PC-3 (cell line): ENCODE measurements at regions of chr14 and their contacts with region 1.

Region 1: DNA sequence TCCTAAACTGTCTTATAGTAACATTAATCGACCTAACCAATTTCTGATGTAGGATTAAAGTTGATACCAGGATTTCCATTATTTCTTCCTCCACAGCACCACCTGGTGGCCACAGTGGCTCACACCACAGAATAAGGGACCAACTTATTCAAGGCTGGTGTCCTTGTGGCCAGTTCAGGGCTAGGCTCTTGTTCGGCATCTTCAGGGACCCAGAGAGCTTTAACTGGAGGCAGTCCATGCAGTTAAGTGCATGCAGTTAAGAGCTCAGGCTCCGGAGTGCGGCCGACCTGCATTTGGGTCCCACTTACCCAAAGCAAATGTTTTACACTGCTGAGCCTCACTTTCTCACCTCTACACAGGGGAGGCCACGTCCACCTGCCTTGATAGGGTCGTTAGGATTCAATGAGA is 42.0 kb upstream of the GPR68 start:
- DNase-seq: peak; percentile 86
- ATAC-seq: peak; percentile 64
- H3K4me3 ChIP-seq: no peak overlapping the region
- H3K27ac ChIP-seq: no peak overlapping the region
- H3K4me1 ChIP-seq: peaks cover 28% of the 10 kb centered on the region
- H3K27me3 ChIP-seq: no peaks in the 10 kb centered on the region
- CTCF ChIP-seq: peak; percentile 93

Region 2: GRCh38 chr14:90903101-90903500 is 383.4 kb before region 1 on chr14:
- CTCF ChIA-PET with region 1: no interaction called
- POLR2A ChIA-PET with region 1: no interaction called
- intact Hi-C with region 1: loop called (anchors 1 kb)
- DNase-seq: peak; percentile 75
- ATAC-seq: peak; percentile 99
- H3K4me3 ChIP-seq: no peak overlapping the region
- H3K27ac ChIP-seq: no peak overlapping the region
- H3K4me1 ChIP-seq: no peaks in the 10 kb centered on the region
- H3K27me3 ChIP-seq: no peaks in the 10 kb centered on the region
- CTCF ChIP-seq: peak; percentile 91

Region 3: GRCh38 chr14:91228112-91229004 is 58.2 kb before region 1 on chr14:
- CTCF ChIA-PET with region 1: no interaction called
- POLR2A ChIA-PET with region 1: no interaction called
- intact Hi-C with region 1: loop called (anchors 10 kb)
- DNase-seq: peak; percentile 85
- ATAC-seq: peak; percentile 79
- H3K4me3 ChIP-seq: no peak overlapping the region
- H3K27ac ChIP-seq: peak overlapping the region; percentile 89
- H3K4me1 ChIP-seq: peaks cover 51% of the 10 kb centered on the region
- H3K27me3 ChIP-seq: no peaks in the 10 kb centered on the region
- CTCF ChIP-seq: no peak

Region 4: GRCh38 chr14:91264151-91265150 is 22.1 kb before region 1 on chr14:
- CTCF ChIA-PET with region 1: no interaction called
- POLR2A ChIA-PET with region 1: no interaction called
- intact Hi-C with region 1: loop called (anchors 1 kb)
- DNase-seq: peak; percentile 30
- ATAC-seq: peak; percentile 65
- H3K4me3 ChIP-seq: peak overlapping the region; percentile 77
- H3K27ac ChIP-seq: no peak overlapping the region
- H3K4me1 ChIP-seq: no peaks in the 10 kb centered on the region
- H3K27me3 ChIP-seq: no peaks in the 10 kb centered on the region
- CTCF ChIP-seq: no peak

Region 5: GRCh38 chr14:91299121-91300115 is 12.9 kb after region 1 on chr14:
- CTCF ChIA-PET with region 1: interaction called, 3 read pairs
- POLR2A ChIA-PET with region 1: no interaction called
- intact Hi-C with region 1: loop called (anchors 1 kb)
- DNase-seq: peak; percentile 53
- ATAC-seq: no peak
- H3K4me3 ChIP-seq: no peak overlapping the region
- H3K27ac ChIP-seq: peak overlapping the region; percentile 70
- H3K4me1 ChIP-seq: peaks cover 25% of the 10 kb centered on the region
- H3K27me3 ChIP-seq: no peaks in the 10 kb centered on the region
- CTCF ChIP-seq: no peak